ENCODE measurements at regions of chr6 and their contacts with region 1.

Region 1: DNA sequence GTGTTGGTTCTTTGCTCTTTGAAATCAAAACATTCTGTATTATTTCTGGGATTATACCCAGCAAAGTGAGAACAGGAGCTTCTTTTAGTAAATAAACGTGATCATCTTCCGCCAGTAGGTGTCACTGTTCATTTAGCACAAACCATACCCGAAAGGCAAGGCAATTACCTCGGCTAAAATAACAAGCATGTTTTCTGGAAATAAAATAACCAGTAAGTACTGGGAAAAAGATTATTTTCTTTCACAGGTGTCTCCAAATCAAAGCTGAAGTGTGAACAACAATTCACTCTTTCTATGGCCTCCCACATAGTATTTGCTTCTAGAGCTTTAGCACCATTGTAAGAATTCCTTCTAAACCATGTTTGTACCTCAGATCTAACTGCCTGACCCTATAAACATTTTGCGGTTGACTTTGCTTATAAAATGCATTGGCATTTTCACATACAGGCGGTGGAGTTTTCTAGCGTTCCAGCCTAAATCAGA is 144.6 kb upstream of the AGPAT4 start:
- DNase-seq: no peak
- H3K4me3 ChIP-seq: no peak overlapping the region
- H3K27ac ChIP-seq: peak overlapping the region in 1 of 4 donors; percentile 20
- H3K4me1 ChIP-seq: peaks cover 0 to 25% (median 20%) of the 10 kb centered on the region in 4 donors
- H3K27me3 ChIP-seq: no peaks in the 10 kb centered on the region
- CTCF ChIP-seq: peak; percentile 63 to 73 (median 71)
- EP300 ChIP-seq: no peak
- POLR2A ChIP-seq: no peak

Region 2: DNA sequence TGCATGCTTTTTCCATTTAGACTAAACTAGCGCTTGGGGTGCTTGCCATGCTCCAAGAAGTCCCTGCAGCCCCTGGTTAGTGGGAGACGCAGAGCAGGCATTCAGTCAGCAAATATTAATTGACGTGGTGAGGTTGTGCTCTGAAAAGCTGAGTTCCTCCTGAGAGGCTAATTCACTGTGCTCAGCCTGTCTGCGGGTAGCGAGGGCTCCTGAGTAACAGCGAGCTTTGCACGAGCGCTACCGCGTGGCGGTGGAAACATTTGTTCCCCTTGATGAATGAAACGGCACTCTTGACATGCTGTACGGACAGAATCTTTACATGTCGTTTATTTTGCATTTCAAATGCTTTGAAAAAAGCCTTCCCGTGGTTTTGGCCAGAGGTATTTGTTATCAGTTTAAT is 26.0 kb after region 1 on chr6:
- intact Hi-C with region 1: loop called (anchors 2 kb)
- DNase-seq: no peak
- H3K4me3 ChIP-seq: peak overlapping the region in 3 of 4 donors; percentile 19 to 30 (median 23)
- H3K27ac ChIP-seq: peak overlapping the region; percentile 21 to 42 (median 32)
- H3K4me1 ChIP-seq: peaks cover 15 to 48% (median 39%) of the 10 kb centered on the region in 4 donors
- H3K27me3 ChIP-seq: peaks cover 0 to 3% (median 0%) of the 10 kb centered on the region in 4 donors
- CTCF ChIP-seq: peak; percentile 19 to 41 (median 23)
- EP300 ChIP-seq: no peak
- POLR2A ChIP-seq: no peak

Region 3: DNA sequence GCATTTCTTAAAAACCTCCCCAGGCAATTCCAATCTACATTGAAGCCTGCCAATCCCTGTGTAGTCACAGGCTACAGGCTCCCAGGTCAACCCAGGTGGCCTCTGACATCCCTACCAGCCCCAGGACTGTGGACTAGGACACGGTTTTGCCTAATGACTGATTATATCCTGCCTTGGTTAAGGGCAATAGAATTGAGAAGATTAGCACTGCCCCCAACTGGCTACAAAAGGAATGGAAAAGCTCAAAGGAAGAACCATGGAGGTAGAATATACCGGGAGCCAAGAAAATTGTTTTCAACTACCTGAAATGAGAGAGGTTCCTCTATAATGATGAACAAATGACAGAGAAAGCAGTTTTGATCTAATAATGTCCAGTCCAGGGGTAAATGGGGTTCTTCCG is 276.5 kb after region 1 on chr6:
- intact Hi-C with region 1: loop called (anchors 5 kb)
- DNase-seq: no peak
- H3K4me3 ChIP-seq: no peak overlapping the region
- H3K27ac ChIP-seq: no peak overlapping the region
- H3K4me1 ChIP-seq: no peaks in the 10 kb centered on the region
- H3K27me3 ChIP-seq: no peaks in the 10 kb centered on the region
- CTCF ChIP-seq: peak; percentile 36 to 53 (median 37)
- EP300 ChIP-seq: no peak
- POLR2A ChIP-seq: no peak

Region 4: GRCh38 chr6:161922631-161923119 is 504.2 kb after region 1 on chr6:
- intact Hi-C with region 1: loop called (anchors 10 kb)
- DNase-seq: no peak
- H3K4me3 ChIP-seq: no peak overlapping the region
- H3K27ac ChIP-seq: no peak overlapping the region
- H3K4me1 ChIP-seq: peaks cover 0 to 11% (median 2%) of the 10 kb centered on the region in 4 donors
- H3K27me3 ChIP-seq: no peaks in the 10 kb centered on the region
- CTCF ChIP-seq: peak in 2 of 3 experiments; percentile 23 to 41
- EP300 ChIP-seq: no peak
- POLR2A ChIP-seq: no peak